Head of caudate nucleus (tissue), 42 donors: ENCODE measurements at regions of chr2 and their contacts with region 1.

Region 1: GRCh38 chr2:230712443-230713330 is at the start of gene CAB39:
- DNase-seq: peak; percentile 64 to 95 (median 90)

Region 2: DNA sequence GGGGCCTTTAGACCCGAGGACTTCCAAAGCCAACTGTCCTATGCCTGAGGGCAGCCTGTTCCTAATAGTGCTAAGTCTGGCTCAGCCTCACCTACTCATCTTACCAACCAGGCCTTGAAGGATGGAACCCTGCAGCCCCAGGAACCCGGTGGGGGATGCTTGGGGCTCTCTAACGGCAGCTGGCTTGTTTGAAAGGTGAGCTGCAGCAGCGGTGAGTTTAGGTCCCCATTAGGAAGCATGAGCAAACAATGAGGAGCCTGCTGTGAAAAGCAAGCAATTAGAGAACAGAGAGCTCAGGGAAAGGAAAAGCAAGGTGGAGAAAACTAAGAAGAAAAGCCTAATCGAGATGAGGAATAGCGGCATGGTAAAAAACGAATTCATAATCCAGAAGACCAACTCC is 532.8 kb before region 1 on chr2:
- intact Hi-C with region 1: no loop called
- DNase-seq: no peak

Region 3: GRCh38 chr2:230684270-230685168 is 28.2 kb before region 1 on chr2:
- intact Hi-C with region 1: no loop called
- DNase-seq: no peak

Region 4: GRCh38 chr2:230798769-230799399 is 86.2 kb after region 1 on chr2:
- intact Hi-C with region 1: loop called (anchors 10 kb)
- DNase-seq: peak in 8 of 42 donors; percentile 26 to 57 (median 39)